Dorsolateral prefrontal cortex (tissue), 120 donors: ENCODE measurements at regions of chr19 and their contacts with region 1.

Region 1: GRCh38 chr19:18281082-18282020 is at the start of gene JUND:
- DNase-seq: peak; percentile 95 to 99 (median 97)
- H3K4me3 ChIP-seq: peak within 1 kb of the TSS; percentile 73 to 100 (median 98)
- H3K27ac ChIP-seq: peak within 1 kb of the TSS; percentile 95 to 100 (median 100)
- H3K27me3 ChIP-seq: no peaks in the 10 kb centered on the region
- CTCF ChIP-seq: peak in 2 of 56 donors; percentile 5 to 9
- total RNA-seq, gene JUND: 163 to 440 (median 240) TPM

Region 2: GRCh38 chr19:18097217-18097992 is 183.9 kb before region 1 on chr19 and contains the start of gene MAST3:
- intact Hi-C with region 1: no loop called
- DNase-seq: peak; percentile 27 to 92 (median 88)
- H3K4me3 ChIP-seq: peak within 1 kb of the TSS; percentile 52 to 94 (median 76)
- H3K27ac ChIP-seq: peak within 1 kb of the TSS; percentile 4 to 100 (median 90)
- H3K27me3 ChIP-seq: peaks cover 0 to 7% (median 0%) of the 10 kb centered on the region in 45 donors
- CTCF ChIP-seq: peak in 3 of 56 donors; percentile 15 to 25 (median 22)
- total RNA-seq, gene MAST3: 138 to 282 (median 205) TPM

Region 3: GRCh38 chr19:18233224-18233825 is 48.0 kb before region 1 on chr19:
- intact Hi-C with region 1: no loop called
- DNase-seq: peak in 1 of 10 donors; percentile 37
- H3K4me3 ChIP-seq: peak overlapping the region in 54 of 59 donors; percentile 6 to 64 (median 43)
- H3K27ac ChIP-seq: peak overlapping the region in 6 of 59 donors; percentile 15 to 63 (median 37)
- H3K27me3 ChIP-seq: peaks cover 0 to 50% (median 21%) of the 10 kb centered on the region in 45 donors
- CTCF ChIP-seq: no peak

Region 4: GRCh38 chr19:18304458-18305310 is 23.3 kb after region 1 on chr19:
- intact Hi-C with region 1: loop called in 1 of 2 experiments (anchors 1 kb)
- DNase-seq: peak; percentile 42 to 93 (median 79)
- H3K4me3 ChIP-seq: peak overlapping the region; percentile 7 to 65 (median 48)
- H3K27ac ChIP-seq: peak overlapping the region; percentile 68 to 100 (median 98)
- H3K27me3 ChIP-seq: no peaks in the 10 kb centered on the region
- CTCF ChIP-seq: peak in 9 of 56 donors; percentile 3 to 32 (median 11)

Region 5: GRCh38 chr19:18328340-18329034 is 47.1 kb after region 1 on chr19:
- intact Hi-C with region 1: loop called (anchors 1 kb)
- DNase-seq: peak; percentile 72 to 98 (median 94)
- H3K4me3 ChIP-seq: peak overlapping the region in 54 of 59 donors; percentile 0 to 60 (median 38)
- H3K27ac ChIP-seq: peak overlapping the region; percentile 2 to 96 (median 77)
- H3K27me3 ChIP-seq: no peaks in the 10 kb centered on the region
- CTCF ChIP-seq: peak; percentile 89 to 99 (median 95)

Region 6: DNA sequence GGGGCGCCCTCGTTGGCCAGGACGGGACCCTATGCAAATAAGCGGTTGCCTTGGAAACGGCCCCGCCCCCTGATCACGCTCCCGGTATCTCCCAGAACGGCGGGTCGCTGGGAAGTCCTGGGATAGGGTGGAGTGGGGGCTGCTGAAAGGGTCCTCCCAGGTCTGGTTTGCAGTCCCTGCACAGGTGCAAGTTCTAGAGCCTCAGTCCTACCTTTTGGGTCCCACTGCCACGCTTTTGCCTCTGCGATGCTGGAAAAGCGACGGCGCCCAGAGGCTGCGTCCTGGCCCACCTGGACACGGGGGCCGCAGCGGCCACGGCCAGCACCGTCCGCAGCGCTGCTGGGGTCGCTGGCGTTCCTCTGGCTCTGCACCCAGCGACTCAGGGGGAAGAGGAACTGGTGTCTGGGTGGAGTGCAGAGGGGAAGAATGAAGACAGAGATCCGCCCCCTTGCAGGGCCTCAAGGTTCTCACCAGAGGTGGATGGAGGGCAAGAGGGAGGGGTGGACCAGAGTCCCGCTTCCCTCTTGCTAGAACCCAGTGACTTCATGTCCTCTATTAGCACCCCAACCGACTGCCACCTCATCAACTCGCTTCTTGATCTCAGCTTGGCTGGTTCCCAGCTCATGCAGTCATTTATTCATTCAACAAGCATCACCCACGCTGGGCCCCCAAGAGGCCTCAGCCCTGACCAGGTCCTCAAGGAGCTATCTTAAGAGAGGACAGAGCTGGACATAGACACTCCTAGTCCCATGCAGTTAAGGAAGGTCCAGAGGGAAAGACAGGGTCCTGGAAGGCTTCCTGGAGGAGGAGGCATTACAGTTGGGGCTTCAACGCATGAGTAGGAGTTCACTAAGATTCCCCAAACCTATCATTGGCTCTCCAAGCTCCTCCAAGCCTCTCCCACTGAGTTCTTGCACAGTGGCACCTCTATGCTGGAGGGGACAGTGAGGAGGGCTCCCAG is 116.2 kb after region 1 on chr19 and contains the start of gene LRRC25:
- intact Hi-C with region 1: loop called in 1 of 2 experiments (anchors 10 kb)
- DNase-seq: no peak
- H3K4me3 ChIP-seq: peak within 1 kb of the TSS in 45 of 59 donors; percentile 0 to 53 (median 29)
- H3K27ac ChIP-seq: peak within 1 kb of the TSS in 2 of 59 donors; percentile 10 to 19
- H3K27me3 ChIP-seq: peaks cover 0 to 18% (median 0%) of the 10 kb centered on the region in 45 donors
- CTCF ChIP-seq: no peak
- total RNA-seq, gene LRRC25: 0.44 to 11.8 (median 1.8) TPM in 119 of 120 experiments, not detected in the other

Region 7: DNA sequence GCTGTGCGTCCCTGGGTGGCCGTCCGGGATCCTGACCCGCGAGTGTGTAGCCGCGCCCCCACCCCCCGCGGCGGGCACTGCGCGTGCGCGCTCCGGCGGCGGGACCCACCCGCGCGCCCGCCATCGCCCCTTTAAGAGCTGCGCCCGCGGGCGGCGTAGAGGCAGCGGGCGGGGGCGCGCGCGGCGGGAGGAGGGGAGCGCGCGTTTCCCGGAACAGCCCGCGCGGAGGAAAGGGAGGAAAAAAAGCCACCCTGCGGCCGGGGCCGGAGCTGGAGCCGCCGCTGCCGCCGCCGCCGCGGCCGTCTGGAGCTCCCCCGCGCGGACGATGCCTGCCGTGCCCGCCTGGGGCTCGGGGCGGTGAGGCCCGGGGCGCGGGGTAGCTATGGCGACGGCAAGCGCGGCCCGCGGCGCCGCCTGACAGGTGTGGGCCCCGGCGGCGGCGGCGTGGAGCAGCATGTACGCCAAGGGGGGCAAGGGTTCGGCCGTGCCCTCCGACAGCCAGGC is 137.9 kb after region 1 on chr19 and contains the start of gene SSBP4:
- intact Hi-C with region 1: loop called in 1 of 2 experiments (anchors 2 kb)
- DNase-seq: peak in 6 of 10 donors; percentile 39 to 84 (median 55)
- H3K4me3 ChIP-seq: peak within 1 kb of the TSS; percentile 44 to 86 (median 68)
- H3K27ac ChIP-seq: peak within 1 kb of the TSS in 58 of 59 donors; percentile 22 to 97 (median 92)
- H3K27me3 ChIP-seq: peaks cover 0 to 17% (median 0%) of the 10 kb centered on the region in 45 donors
- CTCF ChIP-seq: peak in 27 of 56 donors; percentile 5 to 61 (median 36)
- total RNA-seq, gene SSBP4: 42.5 to 168 (median 93.8) TPM